GM12878 (cell line): ENCODE measurements at regions of chr20 and their contacts with region 1.

Region 1: DNA sequence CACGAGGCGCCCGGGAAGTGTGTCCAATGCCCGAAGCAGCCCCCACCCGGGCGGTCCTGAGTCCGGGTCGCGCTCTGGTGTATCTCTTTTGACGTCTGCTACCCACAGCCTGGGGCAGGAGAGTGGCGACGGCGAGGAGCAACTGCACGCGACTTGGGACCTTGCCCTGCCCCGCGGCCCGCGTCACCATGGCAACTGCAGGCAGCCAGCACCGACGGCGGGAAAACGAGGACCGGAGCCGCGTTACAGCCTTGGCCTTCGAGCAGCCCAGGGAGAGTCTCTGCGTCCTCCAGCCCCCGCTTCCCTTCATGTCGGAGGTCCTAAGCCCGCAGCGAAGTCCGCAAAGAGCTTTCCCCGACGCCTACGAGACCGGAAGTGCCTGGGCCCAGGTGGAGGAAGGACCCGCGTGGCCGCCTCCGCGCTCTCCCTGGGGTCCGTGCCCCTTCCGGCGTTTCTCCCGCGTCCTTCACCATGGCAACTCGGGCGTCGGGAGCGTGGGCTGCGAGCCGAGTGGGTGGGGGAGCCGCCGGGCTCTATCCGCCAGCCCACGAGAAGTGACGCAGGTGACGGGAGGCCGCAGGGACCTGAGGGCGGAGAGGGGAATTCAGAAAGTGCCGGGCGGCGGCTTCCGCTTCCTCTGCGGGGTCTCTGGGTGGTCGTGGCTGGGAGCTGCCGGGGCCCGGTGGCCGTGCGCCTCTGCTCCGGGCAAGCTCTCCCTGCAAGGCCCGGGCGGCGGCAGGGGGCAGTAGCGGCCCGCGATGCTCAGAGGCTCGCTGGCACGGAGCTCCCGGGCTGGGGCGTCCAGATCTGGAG is 88.6 kb upstream of the TGM3 start:
- DNase-seq: peak; percentile 19
- ATAC-seq: peak; percentile 96
- H3K4me3 ChIP-seq: peak overlapping the region; percentile 63; the same call in 1 of the 2 replicates
- H3K27ac ChIP-seq: no peak overlapping the region
- H3K4me1 ChIP-seq: peaks cover 3% of the 10 kb centered on the region; the same call in 1 of the 2 replicates
- H3K27me3 ChIP-seq: no peaks in the 10 kb centered on the region; a peak in 1 of 4 replicates
- CTCF ChIP-seq: peak; percentile 71 to 79 (median 74)
- EP300 ChIP-seq: peak; percentile 16 to 32; a peak in 1 of 4 replicates
- POLR2A ChIP-seq: no peak
- RAD21 ChIP-seq: peak; percentile 76

Region 2: GRCh38 chr20:1423625-1424106 is 783.5 kb before region 1 on chr20:
- CTCF ChIA-PET with region 1: no interaction called
- POLR2A ChIA-PET with region 1: no interaction called
- RAD21 ChIA-PET with region 1: no interaction called
- SMC1A ChIA-PET with region 1: no interaction called
- in situ Hi-C with region 1: no loop called
- intact Hi-C with region 1: no loop called
- DNase-seq: no peak
- ATAC-seq: peak; percentile 89
- H3K4me3 ChIP-seq: no peak overlapping the region
- H3K27ac ChIP-seq: no peak overlapping the region
- H3K4me1 ChIP-seq: no peaks in the 10 kb centered on the region
- H3K27me3 ChIP-seq: peaks cover 0 to 2% of the 10 kb centered on the region in 2 experiments; a peak in 2 of 4 replicates
- CTCF ChIP-seq: peak in 2 of 3 experiments; percentile 12 to 36; a peak in 3 of 6 replicates
- EP300 ChIP-seq: no peak
- POLR2A ChIP-seq: no peak
- RAD21 ChIP-seq: peak; percentile 14; the same call in 1 of the 2 replicates

Region 3: DNA sequence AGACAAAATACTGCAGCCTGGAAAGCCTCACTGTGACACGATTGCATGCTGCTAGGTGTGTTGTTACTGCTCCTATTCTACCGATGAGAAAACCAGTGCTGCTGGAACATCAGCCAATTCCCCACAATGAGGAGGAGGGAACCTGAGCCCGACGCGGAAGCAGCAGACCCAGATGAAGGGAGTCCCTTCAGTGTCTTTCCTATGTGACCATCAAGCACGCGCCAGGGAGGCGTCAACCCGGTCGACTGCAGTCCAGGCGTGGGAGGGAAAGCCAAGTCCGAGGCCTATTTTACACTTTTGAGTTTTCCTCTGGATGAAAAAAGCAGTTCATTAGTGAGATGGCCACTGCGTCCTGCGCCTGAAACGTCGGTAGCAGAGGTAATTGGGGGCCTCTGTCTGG is 42.2 kb before region 1 on chr20:
- CTCF ChIA-PET with region 1: no interaction called
- POLR2A ChIA-PET with region 1: no interaction called
- RAD21 ChIA-PET with region 1: no interaction called
- SMC1A ChIA-PET with region 1: no interaction called
- in situ Hi-C with region 1: no loop called
- intact Hi-C with region 1: no loop called
- DNase-seq: no peak
- ATAC-seq: no peak
- H3K4me3 ChIP-seq: no peak overlapping the region
- H3K27ac ChIP-seq: no peak overlapping the region
- H3K4me1 ChIP-seq: no peaks in the 10 kb centered on the region
- H3K27me3 ChIP-seq: no peaks in the 10 kb centered on the region; a peak in 1 of 4 replicates
- CTCF ChIP-seq: no peak
- EP300 ChIP-seq: no peak
- POLR2A ChIP-seq: no peak
- RAD21 ChIP-seq: no peak

Region 4: DNA sequence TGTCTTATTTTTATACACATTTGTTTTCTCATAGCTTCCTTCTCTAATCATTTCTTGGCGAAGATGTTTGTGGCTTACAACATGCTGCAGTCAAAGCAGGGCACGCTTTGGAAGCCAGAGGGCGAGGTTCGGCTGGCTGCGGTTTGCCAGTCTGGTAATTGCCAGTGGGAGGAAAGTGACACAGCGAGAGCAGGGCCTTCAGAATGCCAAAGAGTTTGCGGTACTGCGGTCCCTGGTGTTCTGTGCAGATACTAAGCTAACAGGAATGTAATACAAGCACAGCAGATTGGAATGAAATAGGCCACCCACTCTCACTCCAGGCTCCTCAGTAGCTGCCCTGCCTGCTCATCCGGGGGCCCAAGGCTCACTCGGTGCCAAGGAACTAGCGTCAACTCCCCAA is 29.9 kb after region 1 on chr20:
- CTCF ChIA-PET with region 1: interaction called, 16 read pairs
- POLR2A ChIA-PET with region 1: no interaction called
- RAD21 ChIA-PET with region 1: no interaction called
- SMC1A ChIA-PET with region 1: interaction called, 7 read pairs
- in situ Hi-C with region 1: no loop called
- intact Hi-C with region 1: no loop called
- DNase-seq: no peak
- ATAC-seq: no peak
- H3K4me3 ChIP-seq: no peak overlapping the region
- H3K27ac ChIP-seq: no peak overlapping the region
- H3K4me1 ChIP-seq: no peaks in the 10 kb centered on the region
- H3K27me3 ChIP-seq: peaks cover 0 to 2% of the 10 kb centered on the region in 2 experiments; a peak in 1 of 4 replicates
- CTCF ChIP-seq: no peak
- EP300 ChIP-seq: no peak
- POLR2A ChIP-seq: no peak
- RAD21 ChIP-seq: no peak

Region 5: DNA sequence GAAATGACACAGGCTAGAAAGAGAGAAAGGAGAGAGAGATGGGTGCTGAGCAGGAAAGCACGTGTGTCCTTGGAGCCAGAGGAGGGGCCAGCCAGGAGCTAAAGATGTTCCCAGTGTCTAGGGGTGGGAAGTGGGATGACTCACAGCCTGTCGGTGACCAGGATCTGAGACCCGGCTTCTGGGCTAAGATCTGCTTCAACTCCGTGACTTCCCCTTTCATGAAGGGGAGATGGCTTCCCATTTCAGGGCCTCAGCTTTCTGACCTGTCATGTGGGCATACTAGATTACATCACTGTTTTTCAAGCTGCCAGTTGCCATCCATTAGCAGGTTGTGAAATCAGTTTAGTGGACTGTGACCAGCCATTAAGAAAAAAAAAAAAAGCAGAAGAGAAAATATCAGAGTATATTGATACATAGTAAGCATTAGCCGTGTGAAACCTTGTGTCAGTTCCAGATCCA is 94.0 kb after region 1 on chr20:
- CTCF ChIA-PET with region 1: interaction called, 12 read pairs
- POLR2A ChIA-PET with region 1: no interaction called
- RAD21 ChIA-PET with region 1: interaction called, 19 read pairs
- SMC1A ChIA-PET with region 1: interaction called, 8 read pairs
- in situ Hi-C with region 1: no loop called
- intact Hi-C with region 1: no loop called
- DNase-seq: peak; percentile 89
- ATAC-seq: peak; percentile 98
- H3K4me3 ChIP-seq: no peak overlapping the region
- H3K27ac ChIP-seq: no peak overlapping the region
- H3K4me1 ChIP-seq: peaks cover 14% of the 10 kb centered on the region
- H3K27me3 ChIP-seq: peaks cover 0 to 2% of the 10 kb centered on the region in 2 experiments; a peak in 2 of 4 replicates
- CTCF ChIP-seq: no peak
- EP300 ChIP-seq: peak in 1 of 2 experiments; percentile 53; a peak in 1 of 4 replicates
- POLR2A ChIP-seq: no peak
- RAD21 ChIP-seq: no peak

Region 6: DNA sequence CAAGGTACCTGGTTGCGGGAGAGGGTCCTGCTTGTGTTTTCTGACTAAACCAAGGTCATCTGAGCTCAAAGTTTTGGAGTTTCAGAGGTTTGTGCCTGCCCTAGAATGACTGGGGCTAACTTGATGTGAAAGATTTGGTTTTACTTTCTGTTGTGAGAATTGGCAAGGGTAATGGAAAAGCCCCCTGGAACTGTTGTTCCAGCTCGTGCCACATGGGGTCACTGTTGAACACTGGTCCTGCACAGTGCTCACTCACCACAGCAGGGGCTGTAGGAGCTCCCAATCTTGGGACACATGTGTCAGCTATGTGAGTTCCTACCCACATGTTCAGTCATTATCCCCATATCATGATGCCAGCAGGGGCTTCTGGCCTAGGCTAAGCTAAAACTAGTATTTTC is 180.0 kb after region 1 on chr20:
- CTCF ChIA-PET with region 1: interaction called, 12 read pairs
- POLR2A ChIA-PET with region 1: interaction called, 3 read pairs
- RAD21 ChIA-PET with region 1: interaction called, 8 read pairs
- SMC1A ChIA-PET with region 1: interaction called, 3 read pairs
- in situ Hi-C with region 1: no loop called
- intact Hi-C with region 1: no loop called
- DNase-seq: peak; percentile 21
- ATAC-seq: peak; percentile 82
- H3K4me3 ChIP-seq: no peak overlapping the region
- H3K27ac ChIP-seq: no peak overlapping the region
- H3K4me1 ChIP-seq: peaks cover 14% of the 10 kb centered on the region
- H3K27me3 ChIP-seq: no peaks in the 10 kb centered on the region; a peak in 1 of 4 replicates
- CTCF ChIP-seq: peak; percentile 47 to 66 (median 51); a peak in 5 of 6 replicates
- EP300 ChIP-seq: no peak
- POLR2A ChIP-seq: no peak
- RAD21 ChIP-seq: 0 out of 2 replicates have a peak, but pooled peaks have one; percentile 16

Region 7: GRCh38 chr20:2451939-2452732 is 245.0 kb after region 1 on chr20:
- CTCF ChIA-PET with region 1: interaction called, 78 read pairs
- POLR2A ChIA-PET with region 1: no interaction called
- RAD21 ChIA-PET with region 1: interaction called, 27 read pairs
- SMC1A ChIA-PET with region 1: interaction called, 29 read pairs
- in situ Hi-C with region 1: no loop called
- intact Hi-C with region 1: loop called (anchors 1 kb)
- DNase-seq: no peak
- ATAC-seq: peak; percentile 80
- H3K4me3 ChIP-seq: no peak overlapping the region
- H3K27ac ChIP-seq: no peak overlapping the region
- H3K4me1 ChIP-seq: no peaks in the 10 kb centered on the region
- H3K27me3 ChIP-seq: no peaks in the 10 kb centered on the region
- CTCF ChIP-seq: peak; percentile 76 to 89 (median 87)
- EP300 ChIP-seq: no peak
- POLR2A ChIP-seq: no peak
- RAD21 ChIP-seq: peak; percentile 69

Region 8: GRCh38 chr20:2485661-2486060 is 278.5 kb after region 1 on chr20:
- CTCF ChIA-PET with region 1: no interaction called
- POLR2A ChIA-PET with region 1: no interaction called
- RAD21 ChIA-PET with region 1: no interaction called
- SMC1A ChIA-PET with region 1: no interaction called
- in situ Hi-C with region 1: no loop called
- intact Hi-C with region 1: no loop called
- DNase-seq: no peak
- ATAC-seq: no peak
- H3K4me3 ChIP-seq: no peak overlapping the region
- H3K27ac ChIP-seq: no peak overlapping the region
- H3K4me1 ChIP-seq: no peaks in the 10 kb centered on the region
- H3K27me3 ChIP-seq: no peaks in the 10 kb centered on the region
- CTCF ChIP-seq: no peak
- EP300 ChIP-seq: no peak
- POLR2A ChIP-seq: no peak
- RAD21 ChIP-seq: no peak